Activated T-helper 2 cell treated with anti-CD3 and anti-CD28 coated beads, Interferon-gamma antibody, Interleukin-2, Interleukin-4, amounts not matched to agents 10 μg/mL and 5 μg/mL and 100 μg/mL, durations not matched to agents 14 hours and 24 hours and 36 hours (primary cell): ENCODE measurements at regions of chr4 and their contacts with region 1.

Region 1: DNA sequence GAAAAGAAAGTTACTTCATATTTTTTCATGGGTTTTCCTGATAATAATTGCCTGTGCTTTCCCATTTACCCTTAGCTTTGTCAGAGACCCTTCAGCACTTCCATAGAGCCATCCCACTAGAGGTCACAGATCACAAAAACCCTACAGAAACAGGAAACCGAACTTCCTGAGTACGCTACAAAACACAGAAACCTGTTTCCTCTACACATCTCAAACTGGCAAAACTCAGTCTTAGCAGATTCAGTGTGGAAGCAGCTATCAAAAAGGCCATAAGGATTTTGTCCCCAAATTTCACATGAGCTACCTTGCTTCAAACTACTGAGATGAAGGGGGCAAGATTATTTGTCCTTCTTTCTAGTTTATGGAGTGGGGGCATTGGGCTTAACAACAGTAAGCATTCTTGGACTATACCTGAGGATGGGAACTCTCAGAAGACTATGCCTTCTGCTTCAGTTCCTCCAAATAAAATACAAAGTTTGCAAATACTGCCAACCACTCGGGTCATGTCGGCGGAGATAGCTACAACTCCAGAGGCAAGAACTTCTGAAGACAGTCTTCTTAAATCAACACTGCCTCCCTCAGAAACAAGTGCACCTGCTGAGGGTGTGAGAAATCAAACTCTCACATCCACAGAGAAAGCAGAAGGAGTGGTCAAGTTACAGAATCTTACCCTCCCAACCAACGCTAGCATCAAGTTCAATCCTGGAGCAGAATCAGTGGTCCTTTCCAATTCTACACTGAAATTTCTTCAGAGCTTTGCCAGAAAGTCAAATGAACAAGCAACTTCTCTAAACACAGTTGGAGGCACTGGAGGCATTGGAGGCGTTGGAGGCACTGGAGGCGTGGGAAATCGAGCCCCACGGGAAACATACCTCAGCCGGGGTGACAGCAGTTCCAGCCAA is at the start of gene MMRN1:
- DNase-seq: no peak
- H3K4me3 Mint-ChIP-seq: no peak within 1 kb of the TSS
- H3K27ac Mint-ChIP-seq: no peak within 1 kb of the TSS
- H3K4me1 Mint-ChIP-seq: peaks cover 14% of the 10 kb centered on the region
- H3K27me3 Mint-ChIP-seq: peaks cover 7% of the 10 kb centered on the region
- total RNA-seq, gene MMRN1: not detected in 2 replicates

Region 2: DNA sequence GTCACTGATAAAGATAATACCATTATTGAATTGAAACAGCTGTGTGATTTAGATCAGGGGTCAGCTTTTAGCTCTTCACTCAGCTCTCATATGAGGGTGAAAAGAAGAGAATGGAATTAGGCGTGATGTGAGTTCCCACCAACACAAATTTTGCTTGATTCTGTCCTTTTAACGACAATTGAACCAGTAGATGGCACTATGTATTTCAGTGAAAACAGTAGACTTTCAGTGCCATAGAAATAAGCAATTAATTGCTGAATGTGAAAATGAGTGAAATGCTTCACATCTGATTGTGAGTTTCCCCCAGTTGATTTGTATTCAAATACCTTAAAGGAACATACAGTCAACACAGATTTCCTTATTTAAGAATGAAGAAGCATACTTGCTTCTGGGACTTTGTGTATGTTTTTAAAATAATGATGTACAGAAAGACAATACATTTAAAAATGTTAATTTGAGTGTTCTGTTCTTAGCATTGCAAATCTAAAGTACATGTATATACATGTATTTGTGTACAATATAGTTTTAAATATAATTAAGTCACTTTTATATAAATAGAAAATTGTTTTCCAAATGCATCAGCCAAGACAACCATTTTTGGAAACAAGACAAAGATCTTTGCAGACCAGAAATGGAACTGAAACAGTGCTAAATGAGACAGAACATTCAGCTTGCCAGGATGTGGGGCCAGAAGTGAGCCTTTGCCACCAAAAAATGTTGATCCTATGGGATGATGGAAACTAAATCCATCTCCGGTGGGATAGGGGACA is 236.8 kb before region 1 on chr4:
- intact Hi-C with region 1: loop called (anchors 2 kb)
- DNase-seq: no peak
- H3K4me3 Mint-ChIP-seq: no peak overlapping the region
- H3K27ac Mint-ChIP-seq: no peak overlapping the region
- H3K4me1 Mint-ChIP-seq: peaks cover 2% of the 10 kb centered on the region
- H3K27me3 Mint-ChIP-seq: peaks cover 25% of the 10 kb centered on the region

Region 3: GRCh38 chr4:90078440-90078839 is 183.5 kb after region 1 on chr4:
- intact Hi-C with region 1: no loop called
- DNase-seq: no peak
- H3K4me3 Mint-ChIP-seq: no peak overlapping the region
- H3K27ac Mint-ChIP-seq: no peak overlapping the region
- H3K4me1 Mint-ChIP-seq: no peaks in the 10 kb centered on the region
- H3K27me3 Mint-ChIP-seq: no peaks in the 10 kb centered on the region